Dorsolateral prefrontal cortex (tissue), 120 donors: ENCODE measurements at regions of chr13 and their contacts with region 1.

Region 1: DNA sequence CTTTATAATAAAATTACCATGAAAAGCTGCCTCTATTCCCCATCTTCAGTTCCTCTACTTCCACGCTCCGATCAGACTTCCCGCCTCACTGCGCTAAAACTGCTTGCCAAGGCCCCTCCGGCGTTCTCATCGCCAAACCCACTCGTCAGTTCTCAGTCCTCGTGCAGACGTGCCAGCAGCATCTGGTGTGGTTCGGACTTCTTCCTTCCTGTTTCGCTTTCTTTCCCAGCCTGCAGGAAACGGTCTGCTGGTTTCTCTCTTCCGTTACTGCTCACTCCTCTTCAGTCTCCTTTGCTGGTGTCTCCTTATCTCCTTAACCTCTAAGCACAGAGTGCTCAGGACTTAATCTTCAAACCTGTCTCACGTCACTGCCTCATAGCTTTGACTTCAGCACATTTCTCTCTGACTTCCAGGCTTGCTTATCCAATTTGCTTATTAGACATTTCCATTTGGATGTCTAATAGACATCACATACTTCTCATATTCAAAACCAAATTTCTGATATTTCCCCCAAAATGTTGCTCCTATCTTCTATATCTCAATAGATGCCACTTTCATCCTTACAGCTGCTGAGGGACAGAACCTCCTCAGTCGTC is 40.3 kb downstream of the RCBTB2 start:
- DNase-seq: peak in 7 of 10 donors; percentile 37 to 76 (median 64)
- H3K4me3 ChIP-seq: peak overlapping the region in 54 of 59 donors; percentile 0 to 63 (median 36)
- H3K27ac ChIP-seq: peak overlapping the region in 57 of 59 donors; percentile 26 to 88 (median 74)
- H3K27me3 ChIP-seq: no peaks in the 10 kb centered on the region
- CTCF ChIP-seq: no peak

Region 2: DNA sequence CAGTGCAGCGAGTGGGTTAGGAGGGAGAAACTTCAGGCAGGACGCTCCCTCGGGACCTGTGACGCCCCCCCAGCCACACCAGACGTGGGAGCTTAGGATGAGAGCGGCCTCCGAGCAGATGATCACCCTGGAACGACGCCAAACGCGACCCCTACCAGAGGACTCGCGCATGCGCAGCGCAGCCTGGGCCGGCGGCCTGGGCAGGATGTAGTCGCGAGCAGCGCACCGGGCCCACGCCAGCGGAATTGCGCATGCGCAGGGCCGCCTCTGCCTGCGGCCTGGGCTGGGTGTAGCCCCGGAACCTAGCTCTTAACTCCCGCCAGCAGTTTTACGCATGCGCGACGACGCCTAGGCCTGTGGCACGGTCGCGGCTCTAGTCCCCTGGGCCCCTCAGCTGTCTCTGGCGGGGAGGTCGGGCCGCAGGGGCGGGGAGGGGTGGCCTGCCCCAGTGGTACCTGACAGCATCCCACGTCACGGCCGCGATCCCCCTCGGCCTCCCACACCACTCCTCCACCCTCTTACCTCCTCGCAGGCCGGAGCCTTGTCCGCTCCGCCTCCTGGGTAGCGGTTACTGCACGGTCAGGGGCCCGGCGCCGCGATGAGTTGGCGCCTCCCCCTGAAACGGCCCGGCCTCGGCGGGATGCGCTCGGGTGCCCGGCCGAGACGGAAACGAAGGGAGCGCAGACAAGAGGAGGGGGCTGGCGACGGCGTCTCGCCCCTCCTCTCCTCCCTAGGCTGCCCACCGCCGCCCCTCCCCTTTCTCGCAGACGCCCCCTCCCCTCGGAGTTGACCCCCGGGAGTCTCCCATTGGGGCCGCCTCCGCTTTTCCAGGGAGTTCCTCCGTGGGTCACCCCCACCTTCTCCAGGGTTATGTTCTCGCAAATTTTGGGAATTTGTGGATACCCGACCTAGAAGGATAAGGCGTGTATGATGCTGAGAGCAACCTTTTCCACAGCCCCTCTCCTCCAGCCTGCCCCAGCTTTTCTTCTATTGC is 40.2 kb after region 1 on chr13 and contains the start of gene RCBTB2:
- intact Hi-C with region 1: loop called (anchors 2 to 5 kb)
- DNase-seq: peak; percentile 93 to 98 (median 96)
- H3K4me3 ChIP-seq: peak within 1 kb of the TSS; percentile 57 to 96 (median 85)
- H3K27ac ChIP-seq: peak within 1 kb of the TSS; percentile 90 to 100 (median 98)
- H3K27me3 ChIP-seq: no peaks in the 10 kb centered on the region
- CTCF ChIP-seq: peak in 29 of 56 donors; percentile 3 to 51 (median 23)
- total RNA-seq, gene RCBTB2: 7.7 to 20.0 (median 11.9) TPM